GM10248 (cell line): ENCODE measurements at regions of chr5 and their contacts with region 1.

Region 1: GRCh38 chr5:173643963-173644362 is 27.5 kb upstream of the BOD1 start:
- DNase-seq: peak; percentile 58
- CTCF ChIP-seq: no peak

Region 2: GRCh38 chr5:173657741-173658356 is 13.9 kb after region 1 on chr5:
- CTCF ChIA-PET with region 1: interaction called, 23 read pairs
- POLR2A ChIA-PET with region 1: no interaction called
- DNase-seq: no peak
- CTCF ChIP-seq: no peak